Heart right ventricle (tissue), 16 donors: ENCODE measurements at regions of chr16 and their contacts with region 1.

Region 1: GRCh38 chr16:67636713-67637490 is 8.0 kb upstream of the CARMIL2 start:
- DNase-seq: no peak
- ATAC-seq: no peak
- H3K4me3 ChIP-seq: no peak overlapping the region
- H3K27ac ChIP-seq: no peak overlapping the region
- H3K4me1 ChIP-seq: peaks cover 0 to 24% (median 7%) of the 10 kb centered on the region in 9 donors
- H3K27me3 ChIP-seq: no peaks in the 10 kb centered on the region
- CTCF ChIP-seq: no peak

Region 2: DNA sequence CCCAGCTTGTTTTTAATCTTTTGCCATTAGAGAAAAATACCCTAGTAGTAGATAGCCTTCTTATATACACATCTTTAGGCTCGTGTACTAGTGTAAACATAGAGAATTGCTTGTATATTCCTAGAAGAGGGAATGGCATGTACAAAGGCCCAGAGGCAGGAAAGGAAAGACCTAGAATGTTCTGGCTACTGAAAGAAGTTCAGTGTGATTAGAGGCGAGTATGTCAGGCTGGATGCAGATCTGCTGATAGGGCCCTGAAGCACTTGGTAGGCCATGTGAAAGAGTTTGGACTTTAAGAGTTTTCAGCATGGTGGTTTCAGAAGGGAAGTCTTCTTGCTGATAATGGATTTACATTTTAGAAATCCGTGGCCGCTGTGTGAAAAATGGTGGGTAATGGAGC is 57.2 kb before region 1 on chr16:
- intact Hi-C with region 1: loop called in 1 of 10 experiments (anchors 5 kb)
- DNase-seq: no peak
- ATAC-seq: no peak
- H3K4me3 ChIP-seq: no peak overlapping the region
- H3K27ac ChIP-seq: no peak overlapping the region
- H3K4me1 ChIP-seq: peaks cover 0 to 4% (median 0%) of the 10 kb centered on the region in 9 donors
- H3K27me3 ChIP-seq: no peaks in the 10 kb centered on the region
- CTCF ChIP-seq: no peak

Region 3: GRCh38 chr16:67694611-67695010 is 57.7 kb after region 1 on chr16:
- intact Hi-C with region 1: no loop called
- DNase-seq: no peak
- ATAC-seq: peak in 1 of 8 donors; percentile 77
- H3K4me3 ChIP-seq: no peak overlapping the region
- H3K27ac ChIP-seq: no peak overlapping the region
- H3K4me1 ChIP-seq: peaks cover 0 to 14% (median 0%) of the 10 kb centered on the region in 9 donors
- H3K27me3 ChIP-seq: no peaks in the 10 kb centered on the region
- CTCF ChIP-seq: no peak